ENCODE measurements at regions of chr19 and their contacts with region 1.

Region 1: GRCh38 chr19:49546825-49547565 is 19.2 kb downstream of the RCN3 start:
- DNase-seq: peak; percentile 84
- ATAC-seq: peak; percentile 77
- H3K4me3 Mint-ChIP-seq: peak overlapping the region; percentile 28
- H3K27ac Mint-ChIP-seq: peak overlapping the region; percentile 65
- H3K4me1 Mint-ChIP-seq: peaks cover 50% of the 10 kb centered on the region
- H3K27me3 Mint-ChIP-seq: peaks cover 4% of the 10 kb centered on the region

Region 2: GRCh38 chr19:49473868-49474544 is 73.0 kb before region 1 on chr19 and contains the start of gene FLT3LG:
- CTCF ChIA-PET with region 1: interaction called, 12 read pairs
- POLR2A ChIA-PET with region 1: no interaction called
- DNase-seq: peak; percentile 99
- ATAC-seq: peak; percentile 69
- H3K4me3 Mint-ChIP-seq: peak within 1 kb of the TSS; percentile 94
- H3K27ac Mint-ChIP-seq: peak within 1 kb of the TSS; percentile 94
- H3K4me1 Mint-ChIP-seq: peaks cover 60% of the 10 kb centered on the region
- H3K27me3 Mint-ChIP-seq: no peaks in the 10 kb centered on the region
- total RNA-seq, gene FLT3LG: 280 to 297 TPM

Region 3: GRCh38 chr19:49502866-49503581 is 44.0 kb before region 1 on chr19:
- CTCF ChIA-PET with region 1: interaction called, 211 read pairs
- POLR2A ChIA-PET with region 1: interaction called, 5 read pairs
- DNase-seq: peak; percentile 62
- ATAC-seq: no peak
- H3K4me3 Mint-ChIP-seq: no peak overlapping the region
- H3K27ac Mint-ChIP-seq: peak overlapping the region; percentile 43
- H3K4me1 Mint-ChIP-seq: peaks cover 49% of the 10 kb centered on the region
- H3K27me3 Mint-ChIP-seq: no peaks in the 10 kb centered on the region

Region 4: DNA sequence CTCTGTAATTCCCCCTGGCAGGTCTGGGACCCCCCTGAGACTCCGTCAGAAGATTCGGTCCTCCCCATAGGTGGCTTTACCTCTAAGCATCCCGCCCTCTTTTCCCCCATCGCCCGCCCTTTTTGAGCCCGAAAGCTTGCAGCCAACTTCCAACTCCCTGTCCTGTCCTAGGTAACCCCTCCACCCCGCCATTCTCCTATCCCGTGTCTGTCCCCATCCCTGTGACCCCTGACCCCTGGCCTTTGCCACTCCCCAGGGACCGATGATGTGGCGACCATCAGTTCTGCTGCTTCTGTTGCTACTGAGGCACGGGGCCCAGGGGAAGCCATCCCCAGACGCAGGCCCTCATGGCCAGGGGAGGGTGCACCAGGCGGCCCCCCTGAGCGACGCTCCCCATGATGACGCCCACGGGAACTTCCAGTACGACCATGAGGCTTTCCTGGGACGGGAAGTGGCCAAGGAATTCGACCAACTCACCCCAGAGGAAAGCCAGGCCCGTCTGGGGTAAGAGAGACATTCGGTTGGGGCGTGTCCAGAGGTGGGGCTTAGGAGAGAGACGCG is 18.7 kb before region 1 on chr19:
- CTCF ChIA-PET with region 1: interaction called, 52 read pairs
- POLR2A ChIA-PET with region 1: interaction called, 4 read pairs
- DNase-seq: no peak
- ATAC-seq: no peak
- H3K4me3 Mint-ChIP-seq: peak overlapping the region; percentile 70
- H3K27ac Mint-ChIP-seq: no peak overlapping the region
- H3K4me1 Mint-ChIP-seq: peaks cover 25% of the 10 kb centered on the region
- H3K27me3 Mint-ChIP-seq: peaks cover 14% of the 10 kb centered on the region

Region 5: DNA sequence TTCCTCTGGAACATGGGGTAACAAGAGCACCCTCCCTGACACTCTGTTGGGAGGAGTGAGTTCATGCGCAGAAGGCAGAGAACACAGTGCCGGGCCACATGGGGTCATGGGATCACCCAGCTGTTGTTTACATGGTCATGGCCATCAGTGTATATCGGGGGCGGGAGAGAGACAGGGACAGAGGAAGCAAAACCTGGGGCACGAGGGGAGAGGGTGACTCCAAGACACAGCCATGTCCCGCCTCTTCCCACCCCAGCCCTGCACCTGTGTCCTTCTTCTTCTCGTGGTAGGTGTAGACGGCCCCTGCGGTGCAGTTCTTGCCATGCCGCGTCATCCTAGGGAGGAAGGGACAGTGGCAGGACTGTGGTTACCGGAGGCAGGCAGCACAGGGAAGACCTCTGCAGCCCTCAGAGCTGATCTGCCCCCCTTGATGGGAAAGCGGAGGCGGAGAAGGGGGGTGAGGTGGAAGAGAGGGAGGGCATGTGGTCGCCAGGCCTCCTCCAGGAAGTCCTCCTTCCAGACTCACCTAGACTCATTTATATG is 13.4 kb after region 1 on chr19:
- CTCF ChIA-PET with region 1: interaction called, 82 read pairs
- POLR2A ChIA-PET with region 1: interaction called, 4 read pairs
- DNase-seq: peak; percentile 51
- ATAC-seq: peak; percentile 20
- H3K4me3 Mint-ChIP-seq: peak overlapping the region; percentile 83
- H3K27ac Mint-ChIP-seq: peak overlapping the region; percentile 89
- H3K4me1 Mint-ChIP-seq: peaks cover 86% of the 10 kb centered on the region
- H3K27me3 Mint-ChIP-seq: no peaks in the 10 kb centered on the region

Region 6: DNA sequence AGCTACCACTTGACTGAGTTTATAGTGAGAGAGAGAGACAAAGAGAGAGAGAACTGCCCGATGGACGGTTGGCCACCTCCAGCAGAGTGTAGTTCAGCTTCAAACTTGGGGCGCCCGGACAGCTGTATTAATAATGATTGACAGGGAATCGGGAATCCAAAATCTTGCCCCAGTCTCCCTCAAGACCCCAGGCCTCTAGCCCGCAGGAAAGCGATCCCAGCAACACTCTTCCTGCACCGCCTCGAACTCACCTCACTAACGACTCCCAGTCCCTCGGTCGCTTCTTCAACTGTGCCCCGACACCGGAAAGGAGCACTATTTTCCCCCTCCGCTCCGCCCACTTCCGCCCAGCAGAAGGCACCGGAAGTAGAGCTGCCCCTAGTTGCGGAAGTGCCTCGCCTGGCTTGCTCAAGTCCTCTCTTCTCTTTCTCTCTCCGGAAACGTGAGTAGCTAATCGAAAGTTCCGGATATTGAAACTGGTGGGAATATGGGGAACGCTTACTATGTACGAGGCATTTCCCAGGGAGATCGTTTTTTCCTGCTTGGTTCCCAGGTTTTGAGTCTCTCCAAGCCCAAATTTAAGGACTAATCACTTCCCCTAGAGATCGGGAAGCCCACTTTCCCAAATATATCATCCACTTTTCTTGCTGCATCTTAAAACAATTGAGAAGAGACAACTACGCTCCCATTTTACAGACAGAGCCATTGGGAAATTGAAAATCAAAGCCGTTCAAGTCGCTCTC is 33.4 kb after region 1 on chr19 and contains the start of gene NOSIP:
- CTCF ChIA-PET with region 1: interaction called, 213 read pairs
- POLR2A ChIA-PET with region 1: interaction called, 5 read pairs
- DNase-seq: peak; percentile 98
- ATAC-seq: peak; percentile 97
- H3K4me3 Mint-ChIP-seq: peak within 1 kb of the TSS; percentile 96
- H3K27ac Mint-ChIP-seq: peak within 1 kb of the TSS; percentile 91
- H3K4me1 Mint-ChIP-seq: peaks cover 33% of the 10 kb centered on the region
- H3K27me3 Mint-ChIP-seq: no peaks in the 10 kb centered on the region
- total RNA-seq, gene NOSIP: 147 to 159 TPM